K562 (cell line): ENCODE measurements at regions of chr20 and their contacts with region 1.

Region 1: GRCh38 chr20:7926767-7927166 is 13.5 kb downstream of the HAO1 start:
- DNase-seq: peak in 1 of 4 experiments; percentile 3
- ATAC-seq: no peak
- H3K4me3 ChIP-seq: no peak overlapping the region
- H3K27ac ChIP-seq: no peak overlapping the region
- H3K4me1 ChIP-seq: no peaks in the 10 kb centered on the region
- H3K27me3 ChIP-seq: no peaks in the 10 kb centered on the region
- CTCF ChIP-seq: peak in 1 of 3 experiments; percentile 32; a peak in 2 of 6 replicates
- EP300 ChIP-seq: no peak
- POLR2A ChIP-seq: no peak
- RAD21 ChIP-seq: peak in 1 of 2 experiments; percentile 64; a peak in 3 of 4 replicates

Region 2: GRCh38 chr20:6767536-6768227 is 1159.1 kb before region 1 on chr20 and contains the start of gene BMP2:
- CTCF ChIA-PET with region 1: no interaction called
- POLR2A ChIA-PET with region 1: no interaction called
- in situ Hi-C with region 1: no loop called
- intact Hi-C with region 1: loop called (anchors 10 kb)
- DNase-seq: peak; percentile 9 to 38 (median 17)
- ATAC-seq: peak; percentile 57
- H3K4me3 ChIP-seq: no peak within 1 kb of the TSS; the same call in 1 of the 2 replicates
- H3K27ac ChIP-seq: no peak within 1 kb of the TSS
- H3K4me1 ChIP-seq: peaks cover 0 to 16% of the 10 kb centered on the region in 2 experiments; a peak in 1 of 5 replicates
- H3K27me3 ChIP-seq: no peaks in the 10 kb centered on the region; a peak in 1 of 5 replicates
- CTCF ChIP-seq: no peak
- EP300 ChIP-seq: no peak
- POLR2A ChIP-seq: no peak
- RAD21 ChIP-seq: no peak
- polyA plus RNA-seq, gene BMP2: 0.01 TPM in 1 of 2 experiments, not detected in the other